ENCODE measurements at regions of chr1 and their contacts with region 1.

Region 1: DNA sequence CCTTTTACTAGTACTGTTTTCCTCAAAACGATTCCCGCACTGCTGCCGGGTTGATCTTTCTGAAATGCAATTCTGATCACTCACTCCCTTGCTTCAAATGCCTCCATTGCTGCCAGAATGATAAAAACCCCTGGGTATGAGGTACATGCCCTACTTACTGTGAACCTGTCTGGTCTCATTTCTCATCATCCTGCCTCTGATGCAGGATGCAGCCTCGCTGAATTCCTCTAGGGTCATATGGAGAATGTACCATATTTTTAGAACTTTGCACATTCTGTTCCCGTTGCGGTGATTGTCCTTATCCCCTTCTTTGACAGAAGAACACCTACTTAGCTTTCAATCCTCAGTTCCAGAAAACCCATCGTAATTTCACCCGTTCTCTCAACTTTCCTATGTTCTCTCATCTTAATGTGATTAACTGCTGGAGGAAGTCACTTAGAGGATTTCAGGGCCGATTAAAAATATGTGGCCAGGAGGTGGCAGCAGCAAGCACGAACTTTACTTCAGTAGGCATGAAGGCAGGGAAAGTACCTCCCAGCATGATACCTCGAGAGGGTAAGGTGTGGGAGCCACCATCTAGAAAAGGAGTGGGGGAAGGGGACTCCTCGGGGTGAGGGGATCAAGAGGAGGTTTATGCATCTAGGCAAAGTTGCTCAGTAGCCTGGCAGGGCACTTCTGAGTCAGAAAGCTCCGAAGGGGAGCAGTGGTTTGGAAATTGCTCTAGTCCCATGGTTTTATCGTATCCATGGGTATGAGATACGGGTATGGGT is 361.5 kb upstream of the ZP4 start:
- DNase-seq: peak in 2 of 3 donors; percentile 51 to 64
- ATAC-seq: peak; percentile 95 to 99 (median 98)
- H3K4me3 ChIP-seq: no peak overlapping the region
- H3K27ac ChIP-seq: no peak overlapping the region
- H3K4me1 ChIP-seq: no peaks in the 10 kb centered on the region
- H3K27me3 ChIP-seq: no peaks in the 10 kb centered on the region
- CTCF ChIP-seq: peak; percentile 58 to 69 (median 66)
- POLR2A ChIP-seq: no peak

Region 2: GRCh38 chr1:238119060-238119459 is 133.2 kb before region 1 on chr1:
- intact Hi-C with region 1: no loop called
- DNase-seq: no peak
- ATAC-seq: peak in 1 of 4 donors; percentile 18
- H3K4me3 ChIP-seq: no peak overlapping the region
- H3K27ac ChIP-seq: no peak overlapping the region
- H3K4me1 ChIP-seq: no peaks in the 10 kb centered on the region
- H3K27me3 ChIP-seq: no peaks in the 10 kb centered on the region
- CTCF ChIP-seq: no peak
- POLR2A ChIP-seq: no peak

Region 3: DNA sequence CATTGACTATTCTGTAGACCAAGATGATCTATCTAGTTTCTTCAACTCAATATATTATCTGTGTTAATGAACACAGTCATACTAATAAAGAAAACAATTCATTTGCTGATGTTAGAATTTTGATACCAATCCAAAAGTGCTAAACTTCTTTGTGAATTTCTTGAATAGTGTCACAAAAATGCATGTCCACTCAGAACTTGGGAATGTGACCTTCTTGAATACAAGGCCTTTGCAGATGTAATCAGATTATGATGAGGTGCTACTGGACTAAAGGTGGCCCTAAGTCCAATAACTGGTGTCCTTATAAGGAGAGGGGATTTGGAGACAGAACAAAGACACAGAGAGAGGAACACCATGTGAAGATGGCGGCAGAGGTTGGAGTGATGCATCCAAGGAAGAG is 55.7 kb before region 1 on chr1:
- intact Hi-C with region 1: no loop called
- DNase-seq: no peak
- ATAC-seq: no peak
- H3K4me3 ChIP-seq: no peak overlapping the region
- H3K27ac ChIP-seq: no peak overlapping the region
- H3K4me1 ChIP-seq: no peaks in the 10 kb centered on the region
- H3K27me3 ChIP-seq: no peaks in the 10 kb centered on the region
- CTCF ChIP-seq: no peak
- POLR2A ChIP-seq: no peak

Region 4: GRCh38 chr1:238350471-238350870 is 98.3 kb after region 1 on chr1:
- intact Hi-C with region 1: no loop called
- DNase-seq: no peak
- ATAC-seq: no peak
- H3K4me3 ChIP-seq: no peak overlapping the region
- H3K27ac ChIP-seq: no peak overlapping the region
- H3K4me1 ChIP-seq: peaks cover 0 to 7% (median 0%) of the 10 kb centered on the region in 4 donors
- H3K27me3 ChIP-seq: no peaks in the 10 kb centered on the region
- CTCF ChIP-seq: no peak
- POLR2A ChIP-seq: no peak

Region 5: GRCh38 chr1:238409932-238410331 is 157.7 kb after region 1 on chr1:
- intact Hi-C with region 1: loop called in 1 of 2 experiments (anchors 10 kb)
- DNase-seq: no peak
- ATAC-seq: no peak
- H3K4me3 ChIP-seq: no peak overlapping the region
- H3K27ac ChIP-seq: no peak overlapping the region
- H3K4me1 ChIP-seq: no peaks in the 10 kb centered on the region
- H3K27me3 ChIP-seq: no peaks in the 10 kb centered on the region
- CTCF ChIP-seq: no peak
- POLR2A ChIP-seq: no peak

Region 6: DNA sequence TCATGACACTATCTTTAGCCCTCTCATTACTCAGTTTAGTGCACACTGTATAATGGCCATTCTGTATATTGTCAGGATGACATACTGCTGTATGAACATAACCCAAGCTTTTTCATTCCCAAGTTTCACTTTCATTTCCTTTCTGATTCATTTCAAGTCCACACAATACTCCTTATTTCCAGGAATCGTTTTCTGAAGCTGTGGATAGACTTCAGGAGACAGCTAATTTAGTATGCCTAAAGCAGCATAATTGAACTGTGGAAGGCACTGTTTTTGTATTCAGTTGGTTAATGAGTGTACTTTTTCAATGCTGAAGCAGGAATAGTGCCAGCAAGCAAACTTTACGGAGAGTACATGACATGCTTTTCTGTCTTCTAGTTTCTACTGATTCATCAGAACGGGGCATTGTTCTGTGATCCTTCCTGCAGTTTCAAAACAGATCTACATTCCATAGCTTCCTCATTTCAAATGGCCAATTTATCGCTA is 217.0 kb after region 1 on chr1:
- intact Hi-C with region 1: no loop called
- DNase-seq: no peak
- ATAC-seq: peak in 3 of 4 donors; percentile 37 to 74 (median 71)
- H3K4me3 ChIP-seq: no peak overlapping the region
- H3K27ac ChIP-seq: no peak overlapping the region
- H3K4me1 ChIP-seq: no peaks in the 10 kb centered on the region
- H3K27me3 ChIP-seq: no peaks in the 10 kb centered on the region
- CTCF ChIP-seq: no peak
- POLR2A ChIP-seq: no peak

Measured in right lobe of liver (tissue), 6 donors.